CD8-positive, alpha-beta T cell (primary cell): ENCODE measurements at regions of chr6 and their contacts with region 1.

Region 1: DNA sequence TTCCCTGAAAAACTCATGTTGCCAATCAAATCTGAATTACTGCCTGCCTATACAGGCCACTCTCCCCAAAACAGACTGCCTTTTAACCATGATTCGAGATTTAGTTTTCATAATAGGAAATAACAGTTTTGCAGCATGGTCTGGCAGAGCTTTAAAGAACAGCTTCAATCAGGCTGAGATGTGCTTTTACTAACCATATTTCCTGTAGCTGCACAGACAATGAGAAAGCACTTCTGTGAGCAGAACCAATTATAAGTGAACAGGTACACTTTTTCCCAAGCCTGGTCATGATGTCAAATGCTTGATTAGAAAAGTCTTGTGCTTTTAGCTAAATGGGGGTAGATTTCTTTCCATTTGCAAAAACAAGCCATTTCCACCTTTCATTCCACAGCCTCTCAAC is 108.2 kb downstream of the THEMIS start:
- DNase-seq: peak in 2 of 9 experiments; percentile 41 to 64
- ATAC-seq: peak; percentile 87
- H3K4me3 ChIP-seq: no peak overlapping the region
- H3K4me3 Mint-ChIP-seq: peak overlapping the region; percentile 48
- H3K27ac ChIP-seq: no peak overlapping the region
- H3K27ac Mint-ChIP-seq: peak overlapping the region; percentile 87
- H3K4me1 ChIP-seq: peaks cover 84% of the 10 kb centered on the region
- H3K4me1 Mint-ChIP-seq: peaks cover 90% of the 10 kb centered on the region
- H3K27me3 ChIP-seq: no peaks in the 10 kb centered on the region
- H3K27me3 Mint-ChIP-seq: no peaks in the 10 kb centered on the region
- CTCF ChIP-seq: no peak

Region 2: GRCh38 chr6:127824061-127824460 is 31.4 kb after region 1 on chr6:
- CTCF ChIA-PET with region 1: no interaction called
- POLR2A ChIA-PET with region 1: no interaction called
- intact Hi-C with region 1: loop called in 1 of 2 experiments (anchors 5 kb)
- DNase-seq: no peak
- ATAC-seq: no peak
- H3K4me3 ChIP-seq: no peak overlapping the region
- H3K4me3 Mint-ChIP-seq: peak overlapping the region; percentile 9
- H3K27ac ChIP-seq: no peak overlapping the region
- H3K27ac Mint-ChIP-seq: peak overlapping the region; percentile 77
- H3K4me1 ChIP-seq: peaks cover 46% of the 10 kb centered on the region
- H3K4me1 Mint-ChIP-seq: peaks cover 80% of the 10 kb centered on the region
- H3K27me3 ChIP-seq: no peaks in the 10 kb centered on the region
- H3K27me3 Mint-ChIP-seq: no peaks in the 10 kb centered on the region
- CTCF ChIP-seq: no peak